ENCODE measurements at regions of chr7 and their contacts with region 1.

Region 1: GRCh38 chr7:37448636-37449361 is at the start of gene ELMO1:
- DNase-seq: peak; percentile 51 to 90 (median 82)
- ATAC-seq: peak; percentile 77 to 80
- H3K4me3 Mint-ChIP-seq: peak within 1 kb of the TSS; percentile 91 to 99 (median 96)
- H3K27ac Mint-ChIP-seq: peak within 1 kb of the TSS; percentile 97 to 100 (median 98)
- H3K4me1 Mint-ChIP-seq: peaks cover 25 to 59% (median 54%) of the 10 kb centered on the region in 4 donors
- H3K27me3 Mint-ChIP-seq: peaks cover 0 to 3% (median 0%) of the 10 kb centered on the region in 5 donors
- polyA plus RNA-seq, gene ELMO1: 26.9 to 58.4 (median 44.9) TPM

Region 2: DNA sequence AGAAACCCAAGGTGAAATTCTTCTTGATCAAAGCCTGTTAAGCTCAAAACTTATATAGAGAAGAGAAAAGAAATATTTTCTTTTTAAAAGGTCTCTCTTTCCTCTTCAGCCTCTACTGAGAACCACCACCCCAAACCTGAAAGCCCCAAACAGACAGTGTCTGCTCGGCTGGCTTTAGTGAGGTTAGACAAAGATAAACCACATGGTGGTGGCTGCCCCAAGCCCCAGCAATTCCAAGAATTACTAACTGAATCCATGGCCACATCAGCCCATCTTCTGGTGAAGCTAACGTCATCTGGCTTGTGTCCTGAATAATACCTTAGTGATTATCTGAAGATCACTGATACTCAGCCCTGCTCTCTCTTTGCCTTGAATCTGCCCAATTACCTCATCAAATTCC is 275.1 kb before region 1 on chr7:
- POLR2A ChIA-PET with region 1: no interaction called
- DNase-seq: no peak
- ATAC-seq: no peak
- H3K4me3 Mint-ChIP-seq: no peak overlapping the region
- H3K27ac Mint-ChIP-seq: peak overlapping the region in 1 of 10 donors; percentile 46
- H3K4me1 Mint-ChIP-seq: peaks cover 2 to 8% (median 6%) of the 10 kb centered on the region in 4 donors
- H3K27me3 Mint-ChIP-seq: no peaks in the 10 kb centered on the region

Region 3: DNA sequence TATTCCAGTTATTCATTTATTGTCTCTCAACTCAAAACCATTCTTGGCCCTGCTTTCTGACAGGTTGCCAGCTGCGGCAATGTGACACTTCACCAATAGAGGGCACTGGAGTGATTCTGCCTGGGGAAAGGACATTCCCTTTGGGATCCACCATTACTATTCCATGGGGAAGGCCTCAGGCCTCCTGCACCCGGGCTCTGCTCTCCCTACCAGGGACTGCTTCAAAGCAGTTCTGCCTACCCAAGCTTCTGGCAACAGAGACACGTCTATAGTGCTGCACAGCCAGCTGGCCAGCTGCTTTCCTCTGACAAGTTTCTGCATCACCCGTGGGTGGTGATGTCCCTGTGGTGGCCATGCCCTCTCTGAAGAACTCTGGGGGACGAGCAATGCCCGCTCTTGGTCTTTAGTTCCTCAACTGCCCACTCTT is 164.0 kb before region 1 on chr7:
- POLR2A ChIA-PET with region 1: interaction called, 13 read pairs
- DNase-seq: peak in 6 of 10 donors; percentile 9 to 29 (median 22)
- ATAC-seq: peak in 1 of 2 donors; percentile 37
- H3K4me3 Mint-ChIP-seq: no peak overlapping the region
- H3K27ac Mint-ChIP-seq: peak overlapping the region in 2 of 10 donors; percentile 33 to 67
- H3K4me1 Mint-ChIP-seq: peaks cover 14 to 59% (median 41%) of the 10 kb centered on the region in 4 donors
- H3K27me3 Mint-ChIP-seq: no peaks in the 10 kb centered on the region

Region 4: GRCh38 chr7:37310327-37311080 is 138.3 kb before region 1 on chr7:
- POLR2A ChIA-PET with region 1: interaction called, 12 read pairs
- DNase-seq: peak in 4 of 10 donors; percentile 28 to 56 (median 44)
- ATAC-seq: peak; percentile 86 to 94
- H3K4me3 Mint-ChIP-seq: peak overlapping the region; percentile 22 to 80 (median 76)
- H3K27ac Mint-ChIP-seq: peak overlapping the region; percentile 70 to 97 (median 92)
- H3K4me1 Mint-ChIP-seq: peaks cover 27 to 79% (median 62%) of the 10 kb centered on the region in 4 donors
- H3K27me3 Mint-ChIP-seq: no peaks in the 10 kb centered on the region

Region 5: DNA sequence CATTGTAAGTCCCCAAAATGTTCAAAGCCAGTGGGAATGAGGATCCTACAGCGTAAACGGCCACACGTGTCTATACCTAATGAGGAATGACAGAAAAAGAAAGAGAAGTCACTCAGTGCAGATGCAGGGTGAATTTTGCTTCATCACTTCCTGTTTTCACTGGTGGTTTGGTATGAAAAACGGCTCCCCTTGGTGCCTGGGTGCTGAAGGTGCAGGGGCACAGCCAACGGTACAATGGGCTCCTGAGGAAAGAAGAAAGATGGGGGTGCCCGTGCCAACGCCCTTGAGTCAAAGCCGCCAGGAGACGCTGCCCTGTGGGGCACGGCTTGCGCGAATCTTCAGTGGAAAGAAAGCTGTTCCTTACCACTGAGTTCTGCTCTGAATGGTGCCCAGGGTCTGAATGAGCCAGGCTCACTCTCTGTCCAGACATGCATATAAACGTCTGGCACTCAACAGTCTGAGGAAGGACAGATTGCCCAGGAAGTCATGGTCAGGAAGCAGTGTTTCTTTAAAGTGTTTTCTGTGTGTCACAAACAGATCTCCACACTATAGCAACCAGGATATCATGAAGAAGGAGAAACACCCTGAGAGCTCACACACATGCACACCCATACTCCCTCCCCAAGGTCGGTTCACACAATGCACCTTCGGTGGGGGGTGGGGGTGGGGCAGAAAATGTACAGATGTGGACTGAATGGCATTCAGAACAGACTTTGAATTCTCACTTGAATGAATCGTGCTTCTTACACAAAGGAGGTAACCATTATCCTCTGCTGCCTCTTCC is 105.9 kb before region 1 on chr7:
- POLR2A ChIA-PET with region 1: interaction called, 12 read pairs
- DNase-seq: peak; percentile 34 to 84 (median 66)
- ATAC-seq: peak; percentile 87 to 94
- H3K4me3 Mint-ChIP-seq: peak overlapping the region; percentile 84 to 97 (median 93)
- H3K27ac Mint-ChIP-seq: peak overlapping the region; percentile 89 to 98 (median 96)
- H3K4me1 Mint-ChIP-seq: peaks cover 24 to 71% (median 62%) of the 10 kb centered on the region in 4 donors
- H3K27me3 Mint-ChIP-seq: no peaks in the 10 kb centered on the region

Region 6: GRCh38 chr7:37352974-37353948 is 95.5 kb before region 1 on chr7:
- POLR2A ChIA-PET with region 1: interaction called, 50 read pairs
- DNase-seq: peak; percentile 41 to 86 (median 76)
- ATAC-seq: peak; percentile 91 to 92
- H3K4me3 Mint-ChIP-seq: peak overlapping the region; percentile 92 to 98 (median 95)
- H3K27ac Mint-ChIP-seq: peak overlapping the region; percentile 85 to 96 (median 94)
- H3K4me1 Mint-ChIP-seq: peaks cover 35 to 95% (median 71%) of the 10 kb centered on the region in 4 donors
- H3K27me3 Mint-ChIP-seq: no peaks in the 10 kb centered on the region

Region 7: GRCh38 chr7:37435156-37435855 is 13.5 kb before region 1 on chr7:
- POLR2A ChIA-PET with region 1: interaction called, 15 read pairs
- DNase-seq: no peak
- ATAC-seq: no peak
- H3K4me3 Mint-ChIP-seq: peak overlapping the region in 1 of 10 donors; percentile 37
- H3K27ac Mint-ChIP-seq: peak overlapping the region in 5 of 10 donors; percentile 3 to 48 (median 17)
- H3K4me1 Mint-ChIP-seq: peaks cover 39 to 73% (median 67%) of the 10 kb centered on the region in 4 donors
- H3K27me3 Mint-ChIP-seq: no peaks in the 10 kb centered on the region